Adrenal gland (tissue), 19 donors: ENCODE measurements at regions of chr5 and their contacts with region 1.

Region 1: DNA sequence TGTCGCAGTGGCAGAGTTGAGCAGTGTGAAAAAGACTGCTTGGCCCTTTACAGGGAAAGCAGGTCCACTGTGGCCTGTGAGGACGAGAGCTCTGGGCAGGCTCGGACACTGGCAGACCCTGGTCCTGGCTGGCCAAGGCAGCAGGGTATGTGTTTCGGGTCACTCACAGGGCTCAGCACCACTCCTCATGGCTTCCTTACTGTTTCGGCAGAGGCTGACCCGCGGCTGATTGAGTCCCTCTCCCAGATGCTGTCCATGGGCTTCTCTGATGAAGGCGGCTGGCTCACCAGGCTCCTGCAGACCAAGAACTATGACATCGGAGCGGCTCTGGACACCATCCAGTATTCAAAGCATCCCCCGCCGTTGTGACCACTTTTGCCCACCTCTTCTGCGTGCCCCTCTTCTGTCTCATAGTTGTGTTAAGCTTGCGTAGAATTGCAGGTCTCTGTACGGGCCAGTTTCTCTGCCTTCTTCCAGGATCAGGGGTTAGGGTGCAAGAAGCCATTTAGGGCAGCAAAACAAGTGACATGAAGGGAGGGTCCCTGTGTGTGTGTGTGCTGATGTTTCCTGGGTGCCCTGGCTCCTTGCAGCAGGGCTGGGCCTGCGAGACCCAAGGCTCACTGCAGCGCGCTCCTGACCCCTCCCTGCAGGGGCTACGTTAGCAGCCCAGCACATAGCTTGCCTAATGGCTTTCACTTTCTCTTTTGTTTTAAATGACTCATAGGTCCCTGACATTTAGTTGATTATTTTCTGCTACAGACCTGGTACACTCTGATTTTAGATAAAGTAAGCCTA is 15.7 kb downstream of the SQSTM1 start:
- DNase-seq: peak; percentile 61 to 81 (median 76)
- H3K4me3 ChIP-seq: no peak overlapping the region
- H3K27ac ChIP-seq: peak overlapping the region; percentile 23 to 84 (median 55)
- H3K4me1 ChIP-seq: peaks cover 12 to 50% of the 10 kb centered on the region in 2 donors
- H3K27me3 ChIP-seq: no peaks in the 10 kb centered on the region
- CTCF ChIP-seq: peak in 1 of 6 experiments; percentile 2
- POLR2A ChIP-seq: no peak

Region 2: GRCh38 chr5:179852993-179853547 is 16.6 kb after region 1 on chr5:
- intact Hi-C with region 1: loop called in 1 of 2 experiments (anchors 2 kb)
- DNase-seq: no peak
- H3K4me3 ChIP-seq: no peak overlapping the region
- H3K27ac ChIP-seq: no peak overlapping the region
- H3K4me1 ChIP-seq: no peaks in the 10 kb centered on the region
- H3K27me3 ChIP-seq: no peaks in the 10 kb centered on the region
- CTCF ChIP-seq: no peak
- POLR2A ChIP-seq: no peak

Region 3: GRCh38 chr5:179974946-179975712 is 138.7 kb after region 1 on chr5:
- intact Hi-C with region 1: no loop called
- DNase-seq: peak in 1 of 7 donors; percentile 18
- H3K4me3 ChIP-seq: no peak overlapping the region
- H3K27ac ChIP-seq: no peak overlapping the region
- H3K4me1 ChIP-seq: no peaks in the 10 kb centered on the region
- H3K27me3 ChIP-seq: no peaks in the 10 kb centered on the region
- CTCF ChIP-seq: peak in 4 of 6 experiments; percentile 2 to 30 (median 26)
- POLR2A ChIP-seq: no peak